ENCODE measurements at regions of chr6 and their contacts with region 1.

Region 1: GRCh38 chr6:137873273-137873762 is 6.3 kb downstream of the TNFAIP3 start:
- DNase-seq: peak in 1 of 2 donors; percentile 65
- ATAC-seq: peak; percentile 81 to 94 (median 86)
- H3K4me3 ChIP-seq: peak overlapping the region in 6 of 10 donors; percentile 14 to 75 (median 25)
- H3K27ac ChIP-seq: peak overlapping the region in 7 of 10 donors; percentile 7 to 83 (median 44)
- H3K4me1 ChIP-seq: peaks cover 0 to 77% (median 38%) of the 10 kb centered on the region in 9 donors
- H3K27me3 ChIP-seq: no peaks in the 10 kb centered on the region
- CTCF ChIP-seq: no peak

Region 2: GRCh38 chr6:137625796-137626195 is 247.5 kb before region 1 on chr6:
- intact Hi-C with region 1: no loop called
- DNase-seq: no peak
- ATAC-seq: no peak
- H3K4me3 ChIP-seq: no peak overlapping the region
- H3K27ac ChIP-seq: no peak overlapping the region
- H3K4me1 ChIP-seq: no peaks in the 10 kb centered on the region
- H3K27me3 ChIP-seq: peaks cover 0 to 36% (median 16%) of the 10 kb centered on the region in 7 donors
- CTCF ChIP-seq: no peak

Region 3: DNA sequence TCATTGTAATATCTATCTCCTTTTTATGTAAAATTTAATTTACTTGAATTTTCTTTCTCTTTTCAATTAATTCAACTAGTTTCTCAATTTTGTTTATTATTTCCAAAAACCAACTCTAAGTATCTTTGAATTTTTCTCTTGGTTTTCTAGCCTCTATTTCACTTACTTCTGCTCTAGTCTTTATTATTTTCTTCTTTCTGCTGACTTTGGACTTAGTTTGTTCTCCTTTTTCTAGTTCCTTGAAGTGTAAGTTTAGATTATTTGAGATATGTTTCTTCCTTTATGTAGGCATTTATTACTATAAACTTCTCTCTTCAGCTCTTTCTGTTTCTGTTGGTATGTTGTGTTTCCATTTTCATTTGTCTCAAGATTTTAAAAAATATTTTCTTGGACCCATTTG is 64.5 kb after region 1 on chr6:
- intact Hi-C with region 1: loop called in 3 of 10 experiments (anchors 2 to 10 kb)
- DNase-seq: no peak
- ATAC-seq: no peak
- H3K4me3 ChIP-seq: no peak overlapping the region
- H3K27ac ChIP-seq: peak overlapping the region in 1 of 10 donors; percentile 4
- H3K4me1 ChIP-seq: peaks cover 0 to 11% (median 0%) of the 10 kb centered on the region in 9 donors
- H3K27me3 ChIP-seq: no peaks in the 10 kb centered on the region
- CTCF ChIP-seq: no peak

Measured in heart right ventricle (tissue), 16 donors.